ENCODE measurements at regions of chr17 and their contacts with region 1.

Region 1: DNA sequence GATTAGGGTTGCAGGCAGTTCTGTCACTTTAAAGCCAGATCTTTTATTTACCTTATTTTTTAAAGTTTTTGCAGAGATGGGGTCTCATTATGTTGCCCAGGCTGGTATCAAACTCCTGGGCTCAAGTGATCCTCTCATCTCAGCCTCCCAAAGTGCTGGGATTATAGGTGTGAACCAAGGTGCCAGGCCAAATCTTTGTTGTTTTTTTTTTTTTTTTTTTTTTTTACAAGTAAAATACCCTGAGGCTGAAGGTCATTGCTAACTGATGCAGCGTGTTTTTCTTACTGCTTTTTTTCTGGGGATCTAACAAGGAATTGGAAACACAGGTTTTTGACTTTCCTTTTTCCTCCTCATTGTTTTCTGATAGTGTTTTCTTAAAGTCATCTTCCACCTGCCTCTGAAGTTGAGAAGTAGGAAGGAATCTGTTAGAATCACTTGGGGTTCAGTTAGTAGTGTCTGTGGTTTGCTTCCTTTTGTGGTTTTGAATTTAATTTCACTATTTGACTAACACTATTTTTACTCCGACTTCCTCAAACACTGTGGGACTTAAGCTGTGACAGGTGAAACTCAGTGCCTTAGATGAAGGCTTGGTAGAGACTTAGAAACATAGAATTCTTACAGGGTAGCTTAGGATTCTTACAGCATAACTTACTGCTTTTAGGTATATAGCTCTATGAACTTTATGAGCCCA is 22.2 kb downstream of the CLTC start:
- DNase-seq: peak in 1 of 35 experiments; percentile 51
- ATAC-seq: peak; percentile 69 to 94 (median 90)
- H3K4me3 ChIP-seq: no peak overlapping the region
- H3K4me3 Mint-ChIP-seq: peak overlapping the region; percentile 35 to 68 (median 58)
- H3K27ac ChIP-seq: no peak overlapping the region
- H3K27ac Mint-ChIP-seq: peak overlapping the region; percentile 30 to 71
- H3K4me1 ChIP-seq: peaks cover 23 to 31% of the 10 kb centered on the region in 2 experiments
- H3K4me1 Mint-ChIP-seq: peaks cover 51 to 68% (median 57%) of the 10 kb centered on the region in 3 donors
- H3K27me3 ChIP-seq: no peaks in the 10 kb centered on the region
- H3K27me3 Mint-ChIP-seq: no peaks in the 10 kb centered on the region

Region 2: GRCh38 chr17:59406808-59407429 is 235.0 kb before region 1 on chr17:
- CTCF ChIA-PET with region 1: no interaction called
- POLR2A ChIA-PET with region 1: no interaction called
- DNase-seq: no peak
- ATAC-seq: no peak
- H3K4me3 ChIP-seq: no peak overlapping the region
- H3K4me3 Mint-ChIP-seq: no peak overlapping the region
- H3K27ac ChIP-seq: no peak overlapping the region
- H3K27ac Mint-ChIP-seq: no peak overlapping the region
- H3K4me1 ChIP-seq: no peaks in the 10 kb centered on the region
- H3K4me1 Mint-ChIP-seq: no peaks in the 10 kb centered on the region
- H3K27me3 ChIP-seq: no peaks in the 10 kb centered on the region
- H3K27me3 Mint-ChIP-seq: no peaks in the 10 kb centered on the region

Region 3: DNA sequence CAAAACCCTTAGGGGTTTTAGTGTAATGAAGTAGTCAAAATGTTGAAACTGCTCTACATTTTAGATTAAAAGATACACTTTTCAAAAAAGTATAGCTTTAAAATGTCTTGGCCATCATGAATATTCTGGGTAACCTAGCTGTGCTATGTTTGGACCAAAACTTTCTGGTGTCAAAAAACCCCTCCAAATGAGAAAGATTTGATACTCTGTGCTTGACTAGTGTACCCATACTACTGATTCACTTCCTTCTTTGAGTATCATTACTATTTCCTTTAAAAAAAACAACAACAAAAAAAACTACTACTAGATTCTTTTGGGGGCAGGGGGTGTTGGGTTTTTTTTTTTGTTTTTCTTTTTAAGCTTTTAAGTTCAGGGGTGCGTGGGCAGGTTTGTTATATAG is 28.0 kb after region 1 on chr17:
- CTCF ChIA-PET with region 1: no interaction called
- POLR2A ChIA-PET with region 1: interaction called in 1 of 2 experiments, 11 read pairs
- DNase-seq: no peak
- ATAC-seq: no peak
- H3K4me3 ChIP-seq: no peak overlapping the region
- H3K4me3 Mint-ChIP-seq: no peak overlapping the region
- H3K27ac ChIP-seq: no peak overlapping the region
- H3K27ac Mint-ChIP-seq: peak overlapping the region; percentile 79 to 80
- H3K4me1 ChIP-seq: no peaks in the 10 kb centered on the region
- H3K4me1 Mint-ChIP-seq: peaks cover 0 to 29% (median 22%) of the 10 kb centered on the region in 3 donors
- H3K27me3 ChIP-seq: no peaks in the 10 kb centered on the region
- H3K27me3 Mint-ChIP-seq: no peaks in the 10 kb centered on the region